T-cell (primary cell): ENCODE measurements at regions of chr3 and their contacts with region 1.

Region 1: GRCh38 chr3:139111392-139112229 is 66.9 kb upstream of the PRR23C start:
- DNase-seq: peak in 29 of 35 experiments; percentile 6 to 62 (median 27)
- ATAC-seq: peak in 3 of 4 experiments; percentile 50 to 63 (median 55)
- H3K4me3 ChIP-seq: no peak overlapping the region
- H3K4me3 Mint-ChIP-seq: no peak overlapping the region
- H3K27ac ChIP-seq: no peak overlapping the region
- H3K27ac Mint-ChIP-seq: no peak overlapping the region
- H3K4me1 ChIP-seq: peaks cover 0 to 8% of the 10 kb centered on the region in 2 experiments
- H3K4me1 Mint-ChIP-seq: peaks cover 10 to 17% (median 10%) of the 10 kb centered on the region in 3 donors
- H3K27me3 ChIP-seq: peaks cover 0 to 20% of the 10 kb centered on the region in 2 experiments
- H3K27me3 Mint-ChIP-seq: peaks cover 17 to 28% of the 10 kb centered on the region in 2 donors

Region 2: DNA sequence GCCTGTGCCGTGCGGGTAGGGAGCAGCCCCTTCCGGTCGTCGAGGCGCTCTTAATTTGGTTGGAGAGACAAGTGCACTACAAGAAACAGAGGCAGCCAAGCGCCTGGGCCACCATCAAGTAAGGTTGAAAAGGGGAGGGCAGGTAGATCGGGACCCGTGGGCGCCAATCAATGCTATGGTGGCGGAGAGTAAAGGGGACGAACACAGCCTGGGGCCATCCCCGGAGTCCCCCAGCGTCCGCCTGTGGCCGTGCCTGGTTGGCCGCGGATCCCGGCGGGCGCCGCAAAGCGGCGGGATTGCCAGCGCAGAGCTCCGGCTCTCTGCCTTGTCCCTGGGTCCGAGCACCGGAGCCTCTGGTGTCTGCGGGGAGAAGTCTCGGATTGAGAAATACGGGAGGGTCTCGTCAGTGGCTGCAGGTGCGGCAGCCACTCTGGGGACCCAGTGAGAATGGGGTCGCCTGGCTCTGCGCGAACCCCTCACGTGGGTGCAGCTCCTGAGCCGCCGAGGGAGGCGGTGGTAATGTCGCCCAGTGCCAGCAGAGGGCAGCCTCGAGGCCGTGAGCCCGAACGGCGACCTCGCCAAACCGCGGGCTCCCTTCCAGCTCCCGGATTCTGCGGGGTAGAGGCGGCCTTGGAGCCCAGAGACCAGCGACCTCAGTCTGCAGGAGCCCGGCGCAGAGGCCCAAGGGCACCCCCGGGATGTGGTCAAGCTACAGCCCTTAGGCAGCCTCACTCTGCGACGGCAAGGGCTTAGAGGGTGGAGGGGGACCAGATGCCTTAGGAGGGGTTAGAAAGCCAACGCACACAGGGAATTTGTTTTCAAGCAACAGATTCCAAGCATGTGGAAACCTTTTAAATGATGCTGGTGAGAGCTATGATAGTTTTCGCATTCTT is 175.5 kb before region 1 on chr3:
- CTCF ChIA-PET with region 1: no interaction called
- POLR2A ChIA-PET with region 1: no interaction called
- DNase-seq: peak; percentile 24 to 81 (median 56)
- ATAC-seq: peak; percentile 78 to 86 (median 79)
- H3K4me3 ChIP-seq: peak overlapping the region; percentile 36 to 65
- H3K4me3 Mint-ChIP-seq: peak overlapping the region; percentile 62 to 83 (median 64)
- H3K27ac ChIP-seq: no peak overlapping the region
- H3K27ac Mint-ChIP-seq: no peak overlapping the region
- H3K4me1 ChIP-seq: peaks cover 3 to 46% of the 10 kb centered on the region in 2 experiments
- H3K4me1 Mint-ChIP-seq: peaks cover 33 to 41% (median 41%) of the 10 kb centered on the region in 3 donors
- H3K27me3 ChIP-seq: peaks cover 8 to 76% of the 10 kb centered on the region in 2 experiments
- H3K27me3 Mint-ChIP-seq: peaks cover 60 to 87% of the 10 kb centered on the region in 2 donors

Region 3: GRCh38 chr3:139329345-139329850 is 217.8 kb after region 1 on chr3:
- CTCF ChIA-PET with region 1: interaction called, 8 to 10 read pairs
- POLR2A ChIA-PET with region 1: no interaction called
- DNase-seq: peak; percentile 59 to 90 (median 80)
- ATAC-seq: peak; percentile 90 to 97 (median 92)
- H3K4me3 ChIP-seq: peak overlapping the region; percentile 29 to 42
- H3K4me3 Mint-ChIP-seq: peak overlapping the region; percentile 60 to 64 (median 63)
- H3K27ac ChIP-seq: no peak overlapping the region
- H3K27ac Mint-ChIP-seq: no peak overlapping the region
- H3K4me1 ChIP-seq: peaks cover 2 to 10% of the 10 kb centered on the region in 2 experiments
- H3K4me1 Mint-ChIP-seq: peaks cover 9 to 23% (median 19%) of the 10 kb centered on the region in 3 donors
- H3K27me3 ChIP-seq: peaks cover 2 to 31% of the 10 kb centered on the region in 2 experiments
- H3K27me3 Mint-ChIP-seq: peaks cover 24 to 28% of the 10 kb centered on the region in 2 donors